ENCODE measurements at regions of chr6 and their contacts with region 1.

Region 1: DNA sequence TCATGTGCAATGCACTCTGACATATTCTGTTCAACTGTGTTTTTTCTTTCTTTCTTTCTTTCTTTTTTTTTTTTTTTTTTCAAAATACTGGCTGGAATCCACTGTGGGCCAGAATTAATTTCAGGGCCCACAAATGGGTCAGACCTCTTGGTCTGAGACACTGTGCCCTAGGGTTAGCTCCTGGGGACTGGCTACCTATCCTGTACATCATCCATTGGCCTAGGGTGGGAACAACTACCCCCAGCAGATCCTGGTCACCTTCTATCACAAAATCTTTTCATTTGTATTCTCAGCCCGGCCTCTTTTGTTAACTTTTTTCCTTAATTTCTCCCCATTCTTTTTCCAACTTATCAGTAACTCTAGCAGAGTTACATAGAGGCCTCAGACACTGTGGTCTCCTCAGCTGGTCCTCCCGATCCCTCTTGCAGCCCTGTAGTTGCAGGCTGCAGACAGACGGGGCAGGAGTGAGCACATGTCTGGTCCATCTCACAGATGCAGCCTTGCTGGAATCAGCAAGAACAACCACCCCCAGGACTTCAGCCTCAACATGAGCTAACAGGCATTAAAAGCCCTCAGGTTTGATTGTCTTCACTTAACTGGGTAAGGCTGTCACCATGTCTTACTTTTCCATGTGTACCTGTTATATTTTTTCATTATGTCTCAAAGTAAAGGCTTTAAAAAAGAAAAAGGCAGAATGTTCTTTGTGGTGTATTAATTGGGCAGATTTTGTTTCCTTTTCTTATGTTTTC is 41.3 kb downstream of the TXLNB start:
- DNase-seq: peak; percentile 84
- ATAC-seq: peak; percentile 95
- H3K4me3 Mint-ChIP-seq: peak overlapping the region; percentile 44
- H3K27ac Mint-ChIP-seq: peak overlapping the region; percentile 86
- H3K4me1 Mint-ChIP-seq: peaks cover 40% of the 10 kb centered on the region
- H3K27me3 Mint-ChIP-seq: no peaks in the 10 kb centered on the region

Region 2: DNA sequence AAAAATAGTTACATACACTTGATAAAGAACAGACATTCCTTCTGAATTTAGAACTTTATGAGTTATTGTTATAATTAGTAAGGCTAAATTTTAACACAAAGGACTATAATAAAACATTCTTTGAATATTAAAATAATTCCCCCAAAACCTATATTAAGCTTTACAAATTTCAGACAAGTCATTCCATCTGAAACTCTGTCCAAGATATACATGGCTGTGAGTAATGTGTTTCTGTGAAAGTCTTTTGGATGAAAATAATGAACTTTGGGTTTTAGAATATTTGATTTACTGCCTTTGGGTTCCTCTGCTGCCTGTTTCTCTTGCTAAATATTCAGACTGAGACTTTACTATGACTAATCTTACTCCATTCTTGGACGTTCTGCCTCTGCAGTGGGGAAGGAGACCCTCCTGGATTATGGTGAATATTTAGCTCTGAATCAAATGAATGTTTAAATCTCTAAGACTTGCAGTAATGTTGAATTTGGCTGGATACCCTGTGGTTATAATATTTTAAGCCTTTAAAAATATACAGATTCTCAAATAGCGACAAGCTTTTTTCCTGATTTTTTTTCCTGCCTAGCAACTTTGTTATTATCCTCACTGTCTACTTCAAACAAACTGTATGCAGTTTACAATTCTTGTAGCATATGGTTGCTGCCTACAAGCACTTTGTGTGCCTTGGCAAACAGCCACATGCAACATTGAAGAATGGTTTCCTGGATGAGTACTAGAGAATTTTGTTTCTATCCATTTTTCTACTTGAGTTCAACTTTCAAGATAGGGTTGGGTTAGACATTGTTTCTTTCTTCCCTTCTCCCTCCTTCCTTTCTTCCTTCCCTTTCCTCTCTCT is 10.1 kb before region 1 on chr6:
- CTCF ChIA-PET with region 1: interaction called, 12 read pairs
- DNase-seq: no peak
- ATAC-seq: no peak
- H3K4me3 Mint-ChIP-seq: no peak overlapping the region
- H3K27ac Mint-ChIP-seq: no peak overlapping the region
- H3K4me1 Mint-ChIP-seq: peaks cover 7% of the 10 kb centered on the region
- H3K27me3 Mint-ChIP-seq: no peaks in the 10 kb centered on the region

Region 3: GRCh38 chr6:139378882-139379341 is 128.4 kb after region 1 on chr6:
- CTCF ChIA-PET with region 1: no interaction called
- DNase-seq: no peak
- ATAC-seq: no peak
- H3K4me3 Mint-ChIP-seq: no peak overlapping the region
- H3K27ac Mint-ChIP-seq: peak overlapping the region; percentile 39
- H3K4me1 Mint-ChIP-seq: peaks cover 32% of the 10 kb centered on the region
- H3K27me3 Mint-ChIP-seq: no peaks in the 10 kb centered on the region